Gastrocnemius medialis (tissue), 4 donors: ENCODE measurements at regions of chr9 and their contacts with region 1.

Region 1: GRCh38 chr9:95092262-95093072 is 225.0 kb downstream of the FANCC start:
- DNase-seq: peak in 1 of 2 donors; percentile 56
- ATAC-seq: peak in 1 of 2 donors; percentile 8
- H3K4me3 ChIP-seq: no peak overlapping the region
- H3K27ac ChIP-seq: peak overlapping the region; percentile 87 to 96 (median 90)
- H3K4me1 ChIP-seq: peaks cover 85% of the 10 kb centered on the region in 2 donors
- H3K27me3 ChIP-seq: no peaks in the 10 kb centered on the region
- CTCF ChIP-seq: no peak
- POLR2A ChIP-seq: no peak

Region 2: DNA sequence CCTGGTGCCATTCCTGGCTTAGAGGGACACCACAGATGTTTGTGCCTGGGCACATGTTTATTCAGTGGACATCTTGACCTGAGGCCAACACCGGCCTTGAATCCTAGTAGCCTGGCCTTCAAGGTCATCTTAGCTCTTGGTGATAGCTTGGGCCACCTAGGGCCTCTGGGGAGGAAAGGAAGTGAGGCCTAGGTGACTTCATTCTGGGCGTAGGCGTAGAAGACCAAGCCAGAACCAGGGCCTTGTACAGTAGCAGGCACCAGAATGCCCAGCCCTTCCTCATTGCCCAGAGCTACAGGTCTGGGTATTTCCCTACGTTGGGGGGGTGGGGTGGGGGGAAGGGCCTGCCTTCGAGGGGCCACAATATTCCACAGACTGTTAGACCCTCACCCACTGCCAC is 1874.8 kb before region 1 on chr9:
- in situ Hi-C with region 1: no loop called
- intact Hi-C with region 1: loop called (anchors 5 kb)
- DNase-seq: peak; percentile 67 to 89
- ATAC-seq: peak; percentile 62 to 66
- H3K4me3 ChIP-seq: no peak overlapping the region
- H3K27ac ChIP-seq: peak overlapping the region; percentile 97 to 99 (median 98)
- H3K4me1 ChIP-seq: peaks cover 46 to 49% of the 10 kb centered on the region in 2 donors
- H3K27me3 ChIP-seq: no peaks in the 10 kb centered on the region
- CTCF ChIP-seq: no peak
- POLR2A ChIP-seq: no peak

Region 3: DNA sequence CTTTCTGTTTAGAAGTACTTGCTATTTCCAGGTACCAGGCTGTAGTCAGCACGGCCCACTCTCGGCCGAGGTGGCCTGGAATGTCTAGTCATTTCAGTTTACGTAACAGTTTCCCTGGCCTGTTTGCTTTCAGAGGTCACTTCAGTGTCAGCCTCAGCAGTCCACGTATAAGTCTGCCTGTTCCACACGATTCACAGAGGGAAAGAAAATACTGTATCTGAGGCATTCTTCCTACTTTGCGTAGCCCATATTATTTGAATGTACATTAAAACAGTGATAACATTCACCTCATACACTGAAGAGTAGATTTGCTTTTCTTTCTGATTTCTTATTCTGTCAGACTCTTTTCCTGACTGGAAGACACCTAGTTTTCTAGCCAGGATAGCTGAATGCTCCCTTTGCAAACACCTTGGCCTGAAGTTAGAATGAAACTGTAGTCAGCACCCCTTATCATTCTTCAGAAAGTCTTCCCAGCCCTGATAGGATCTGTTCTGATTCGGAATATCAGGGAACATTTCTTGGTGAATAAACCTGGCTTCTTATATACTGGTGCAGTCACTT is 225.1 kb before region 1 on chr9:
- in situ Hi-C with region 1: no loop called
- intact Hi-C with region 1: loop called (anchors 5 kb)
- DNase-seq: peak; percentile 61 to 85
- ATAC-seq: peak; percentile 80 to 86
- H3K4me3 ChIP-seq: peak overlapping the region in 3 of 4 donors; percentile 16 to 30 (median 20)
- H3K27ac ChIP-seq: peak overlapping the region; percentile 89 to 96 (median 94)
- H3K4me1 ChIP-seq: peaks cover 73 to 76% of the 10 kb centered on the region in 2 donors
- H3K27me3 ChIP-seq: no peaks in the 10 kb centered on the region
- CTCF ChIP-seq: no peak
- POLR2A ChIP-seq: no peak

Region 4: DNA sequence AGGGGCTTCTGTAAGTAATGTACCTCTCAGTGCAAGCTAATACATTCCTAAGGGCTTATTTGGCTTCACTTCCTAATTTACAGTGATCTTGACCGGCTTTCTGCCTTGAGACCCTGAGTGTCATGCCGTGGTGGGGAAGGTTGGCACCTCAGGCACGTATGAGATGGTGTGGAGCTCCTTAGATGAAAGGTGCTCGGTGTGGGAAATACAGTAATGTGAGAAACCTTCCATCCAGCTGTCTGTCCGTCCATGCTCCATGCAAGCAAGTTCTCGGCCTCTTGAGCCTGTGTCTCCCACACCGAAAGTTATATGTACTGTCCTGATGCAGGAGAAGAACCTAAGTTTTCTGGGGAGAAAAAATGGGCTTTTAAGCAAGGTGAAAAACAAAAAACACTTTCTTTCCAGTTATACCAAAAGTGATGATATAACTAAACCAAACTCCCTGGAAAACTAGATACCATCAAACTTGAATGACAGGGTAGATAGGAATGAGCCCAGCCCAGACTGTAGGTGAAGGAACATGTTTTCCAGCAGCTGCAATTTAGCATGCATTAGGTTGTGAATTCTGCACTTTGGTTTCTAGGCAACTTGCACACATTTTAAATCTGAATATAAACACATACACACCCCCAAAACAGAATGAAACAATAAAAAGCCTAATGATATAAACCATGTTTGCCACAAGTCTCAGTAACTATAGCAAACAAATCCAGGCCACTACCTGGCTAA is 54.5 kb before region 1 on chr9:
- in situ Hi-C with region 1: no loop called
- intact Hi-C with region 1: loop called (anchors 1 kb)
- DNase-seq: no peak
- ATAC-seq: peak in 1 of 2 donors; percentile 29
- H3K4me3 ChIP-seq: no peak overlapping the region
- H3K27ac ChIP-seq: peak overlapping the region; percentile 62 to 98 (median 94)
- H3K4me1 ChIP-seq: peaks cover 77 to 83% of the 10 kb centered on the region in 2 donors
- H3K27me3 ChIP-seq: no peaks in the 10 kb centered on the region
- CTCF ChIP-seq: no peak
- POLR2A ChIP-seq: no peak